ENCODE measurements at regions of chr11 and their contacts with region 1.

Region 1: DNA sequence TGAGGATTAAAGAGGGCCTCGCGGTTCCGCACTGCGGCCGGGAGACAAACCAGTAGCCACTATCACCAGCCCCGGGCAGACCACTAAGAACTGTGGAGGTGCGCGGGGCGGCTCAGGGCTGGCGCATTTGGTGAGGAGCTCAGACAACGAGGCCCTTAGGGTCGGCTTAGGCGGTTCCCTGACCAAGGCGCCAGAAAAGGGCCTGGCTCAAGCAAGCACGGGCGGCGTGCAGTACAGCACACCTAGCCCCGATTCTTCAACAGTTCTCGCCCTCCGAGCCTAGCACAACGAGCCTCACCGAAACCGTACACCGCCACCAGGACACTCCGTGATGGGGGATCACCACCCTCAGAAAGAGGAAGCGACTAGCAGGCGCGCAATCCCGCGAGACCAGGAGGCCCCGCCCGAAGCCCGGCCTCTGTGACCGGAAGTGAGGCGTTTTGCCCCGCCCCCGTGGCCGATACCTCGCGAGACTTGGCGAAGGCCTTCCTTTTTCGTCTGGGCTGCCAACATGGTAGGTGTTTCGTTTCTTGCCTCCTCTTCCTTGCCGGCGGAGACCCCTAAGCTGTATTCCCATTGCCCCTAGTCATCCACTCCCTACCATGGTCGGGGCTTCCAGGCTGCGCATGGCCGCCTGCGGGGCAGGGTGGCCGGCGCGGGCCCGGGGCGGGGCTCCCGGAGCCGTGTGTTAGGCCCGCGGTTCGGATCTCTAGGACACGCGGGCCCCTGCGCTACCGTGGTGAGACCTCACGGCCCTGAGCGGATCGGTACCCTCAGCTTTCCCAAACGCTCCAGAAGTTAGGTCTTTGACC is at the starts of genes RPL27A and TRIM66:
- DNase-seq: peak; percentile 72
- H3K4me3 ChIP-seq: peak within 1 kb of the TSS; percentile 97
- CTCF ChIP-seq: peak; percentile 26

Region 2: GRCh38 chr11:8545698-8546366 is 136.7 kb before region 1 on chr11:
- CTCF ChIA-PET with region 1: no interaction called
- POLR2A ChIA-PET with region 1: no interaction called
- DNase-seq: no peak
- H3K4me3 ChIP-seq: no peak overlapping the region
- CTCF ChIP-seq: no peak

Region 3: GRCh38 chr11:8604078-8604723 is 78.3 kb before region 1 on chr11:
- CTCF ChIA-PET with region 1: no interaction called
- POLR2A ChIA-PET with region 1: interaction called, 10 read pairs
- DNase-seq: peak; percentile 100
- H3K4me3 ChIP-seq: no peak overlapping the region
- CTCF ChIP-seq: peak; percentile 72

Region 4: GRCh38 chr11:8671193-8671612 is 11.3 kb before region 1 on chr11:
- CTCF ChIA-PET with region 1: interaction called, 4 read pairs
- POLR2A ChIA-PET with region 1: interaction called, 17 read pairs
- DNase-seq: peak; percentile 91
- H3K4me3 ChIP-seq: no peak overlapping the region
- CTCF ChIP-seq: no peak

Measured in AG04449 (cell line).